ENCODE measurements at regions of chr15 and their contacts with region 1.

Region 1: DNA sequence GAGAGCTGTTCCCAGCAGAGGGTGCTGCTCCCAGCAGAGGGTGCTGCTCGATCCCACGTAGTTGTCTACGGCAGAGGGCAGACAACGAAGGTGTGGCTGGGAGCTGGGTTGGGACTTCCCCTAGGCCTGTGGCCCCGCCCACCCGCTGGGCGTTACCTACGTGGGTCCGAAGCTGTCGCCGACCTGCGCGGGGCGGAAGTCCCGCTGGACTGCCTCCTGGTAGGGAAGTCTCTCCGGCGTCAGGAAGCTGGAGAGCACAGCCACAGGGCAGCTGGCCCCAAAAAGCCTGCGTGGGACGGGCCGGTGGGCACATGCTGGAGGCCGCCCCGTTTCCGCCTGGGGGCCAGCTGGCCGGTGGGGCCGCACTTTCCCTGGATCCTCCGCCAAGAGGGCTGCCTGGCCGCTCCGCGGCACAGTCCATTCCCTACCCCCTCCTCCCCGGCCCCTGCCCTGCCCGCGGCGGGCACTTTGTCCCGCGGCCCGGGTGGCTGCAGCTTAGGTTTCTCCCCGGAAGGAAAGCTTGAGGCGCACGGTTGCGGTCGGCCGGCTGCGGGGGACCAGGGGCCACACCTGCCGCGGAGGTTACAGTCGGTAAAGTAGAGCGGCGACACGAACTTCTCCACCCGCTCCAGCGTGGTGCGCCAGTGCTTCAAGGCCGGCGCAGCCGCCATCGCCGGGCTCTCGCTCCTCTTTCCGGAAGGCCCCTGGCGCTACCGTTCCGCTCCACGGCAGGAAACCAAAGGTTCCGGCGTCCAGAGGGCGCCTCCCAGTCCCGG is at the start of gene MAN2C1:
- DNase-seq: peak; percentile 81
- H3K4me3 ChIP-seq: peak within 1 kb of the TSS; percentile 86
- CTCF ChIP-seq: peak; percentile 90

Region 2: GRCh38 chr15:75350601-75351361 is 17.3 kb before region 1 on chr15:
- CTCF ChIA-PET with region 1: interaction called, 50 read pairs
- POLR2A ChIA-PET with region 1: interaction called, 7 read pairs
- DNase-seq: no peak
- H3K4me3 ChIP-seq: no peak overlapping the region
- CTCF ChIP-seq: no peak

Region 3: GRCh38 chr15:75397494-75397893 is 29.4 kb after region 1 on chr15:
- CTCF ChIA-PET with region 1: interaction called, 16 read pairs
- POLR2A ChIA-PET with region 1: interaction called, 4 read pairs
- DNase-seq: no peak
- H3K4me3 ChIP-seq: no peak overlapping the region
- CTCF ChIP-seq: no peak

Region 4: DNA sequence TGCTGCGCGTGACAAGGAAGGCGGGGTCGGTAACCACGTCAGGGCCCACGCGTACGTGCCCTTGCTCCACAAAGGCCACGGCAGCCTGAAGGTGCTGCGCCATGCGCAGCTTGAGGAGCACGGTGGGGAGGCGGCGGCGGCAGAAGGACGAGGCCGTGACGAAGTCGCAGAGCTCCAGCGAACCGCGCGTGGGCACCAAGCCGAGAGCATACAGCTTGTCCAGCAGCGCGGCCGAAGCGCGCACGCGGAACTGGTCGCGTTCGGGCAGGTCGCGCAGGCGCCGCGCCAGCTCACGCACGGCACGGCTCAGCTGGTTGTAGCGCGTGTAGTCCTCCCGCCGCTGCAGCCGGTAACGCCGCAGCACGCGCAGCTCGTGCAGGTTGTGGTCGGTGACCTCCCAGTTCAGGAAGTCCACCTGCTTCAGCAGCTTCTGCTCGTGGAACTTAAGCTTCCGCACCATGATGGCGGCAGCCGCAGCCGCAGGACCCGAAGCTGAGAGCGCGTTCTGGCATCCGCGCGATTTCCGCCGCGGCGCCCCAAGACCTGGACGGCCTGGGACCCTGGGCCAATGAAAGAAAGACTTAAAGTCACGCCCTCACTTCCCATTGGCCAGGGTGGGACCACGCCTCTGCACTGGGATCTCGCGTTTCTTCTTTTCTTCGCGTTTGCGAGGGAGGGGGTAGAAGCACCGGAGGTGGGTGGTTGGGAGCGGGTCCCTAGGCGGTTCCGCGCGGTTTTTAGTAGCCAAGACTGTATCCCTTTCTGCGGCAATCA is 271.8 kb after region 1 on chr15 and contains the start of gene IMP3:
- CTCF ChIA-PET with region 1: interaction called, 25 read pairs
- POLR2A ChIA-PET with region 1: interaction called, 9 read pairs
- DNase-seq: no peak
- H3K4me3 ChIP-seq: peak within 1 kb of the TSS; percentile 99
- CTCF ChIP-seq: no peak

Measured in AG04449 (cell line).